ENCODE measurements at regions of chr10 and their contacts with region 1.

Region 1: GRCh38 chr10:25113191-25114035 is 61.4 kb upstream of the GPR158 start:
- DNase-seq: peak; percentile 72
- ATAC-seq: peak; percentile 96
- H3K4me3 ChIP-seq: no peak overlapping the region
- H3K27ac ChIP-seq: no peak overlapping the region
- H3K4me1 ChIP-seq: peaks cover 6 to 16% of the 10 kb centered on the region in 2 experiments; a peak in 3 of 4 replicates
- H3K27me3 ChIP-seq: no peaks in the 10 kb centered on the region
- CTCF ChIP-seq: peak; percentile 73 to 89 (median 87); a peak in 5 of 6 replicates
- POLR2A ChIP-seq: no peak
- RAD21 ChIP-seq: peak; percentile 86

Region 2: GRCh38 chr10:25047591-25048301 is 65.7 kb before region 1 on chr10:
- CTCF ChIA-PET with region 1: no interaction called
- POLR2A ChIA-PET with region 1: no interaction called
- RAD21 ChIA-PET with region 1: no interaction called
- intact Hi-C with region 1: no loop called
- DNase-seq: no peak
- ATAC-seq: no peak
- H3K4me3 ChIP-seq: no peak overlapping the region
- H3K27ac ChIP-seq: no peak overlapping the region
- H3K4me1 ChIP-seq: no peaks in the 10 kb centered on the region
- H3K27me3 ChIP-seq: no peaks in the 10 kb centered on the region
- CTCF ChIP-seq: no peak
- POLR2A ChIP-seq: no peak
- RAD21 ChIP-seq: no peak

Region 3: GRCh38 chr10:25226775-25227682 is 113.6 kb after region 1 on chr10:
- CTCF ChIA-PET with region 1: interaction called, 40 read pairs
- POLR2A ChIA-PET with region 1: no interaction called
- RAD21 ChIA-PET with region 1: interaction called, 7 to 8 read pairs
- intact Hi-C with region 1: loop called (anchors 1 kb)
- DNase-seq: peak; percentile 48
- ATAC-seq: peak; percentile 88
- H3K4me3 ChIP-seq: no peak overlapping the region
- H3K27ac ChIP-seq: no peak overlapping the region
- H3K4me1 ChIP-seq: no peaks in the 10 kb centered on the region
- H3K27me3 ChIP-seq: no peaks in the 10 kb centered on the region
- CTCF ChIP-seq: peak; percentile 67 to 83 (median 78)
- POLR2A ChIP-seq: no peak
- RAD21 ChIP-seq: peak; percentile 78

Region 4: DNA sequence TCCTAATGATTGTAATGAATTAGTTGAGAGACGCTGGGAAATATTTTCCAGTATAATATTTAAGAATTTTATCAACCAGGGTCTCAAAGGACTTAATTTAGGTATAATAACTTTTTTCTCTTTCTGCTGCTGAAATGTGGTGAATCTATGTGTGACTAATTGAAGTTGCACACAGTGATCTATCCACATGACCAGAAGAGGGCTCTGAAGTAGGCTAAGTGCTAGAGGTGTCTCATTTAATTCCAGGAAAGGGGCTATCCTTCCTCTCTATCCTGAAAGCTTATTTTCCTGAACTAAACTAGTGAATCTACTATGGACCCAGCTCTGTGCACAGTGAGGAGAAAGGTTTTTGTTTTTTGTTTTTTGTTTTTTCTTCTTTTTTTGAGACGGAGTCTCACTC is 526.2 kb after region 1 on chr10:
- CTCF ChIA-PET with region 1: interaction called, 3 read pairs
- POLR2A ChIA-PET with region 1: no interaction called
- RAD21 ChIA-PET with region 1: no interaction called
- intact Hi-C with region 1: loop called (anchors 5 kb)
- DNase-seq: no peak
- ATAC-seq: no peak
- H3K4me3 ChIP-seq: no peak overlapping the region
- H3K27ac ChIP-seq: no peak overlapping the region
- H3K4me1 ChIP-seq: no peaks in the 10 kb centered on the region
- H3K27me3 ChIP-seq: no peaks in the 10 kb centered on the region; the same call in 1 of the 2 replicates
- CTCF ChIP-seq: no peak
- POLR2A ChIP-seq: no peak
- RAD21 ChIP-seq: no peak

Region 5: GRCh38 chr10:25713894-25714240 is 600.5 kb after region 1 on chr10:
- CTCF ChIA-PET with region 1: interaction called, 7 read pairs
- POLR2A ChIA-PET with region 1: no interaction called
- RAD21 ChIA-PET with region 1: no interaction called
- intact Hi-C with region 1: loop called (anchors 5 kb)
- DNase-seq: no peak
- ATAC-seq: no peak
- H3K4me3 ChIP-seq: no peak overlapping the region
- H3K27ac ChIP-seq: no peak overlapping the region
- H3K4me1 ChIP-seq: no peaks in the 10 kb centered on the region
- H3K27me3 ChIP-seq: no peaks in the 10 kb centered on the region; the same call in 1 of the 2 replicates
- CTCF ChIP-seq: no peak
- POLR2A ChIP-seq: no peak
- RAD21 ChIP-seq: no peak

Measured in HCT116 (cell line).